Caco-2 (cell line): ENCODE measurements at regions of chr3 and their contacts with region 1.

Region 1: DNA sequence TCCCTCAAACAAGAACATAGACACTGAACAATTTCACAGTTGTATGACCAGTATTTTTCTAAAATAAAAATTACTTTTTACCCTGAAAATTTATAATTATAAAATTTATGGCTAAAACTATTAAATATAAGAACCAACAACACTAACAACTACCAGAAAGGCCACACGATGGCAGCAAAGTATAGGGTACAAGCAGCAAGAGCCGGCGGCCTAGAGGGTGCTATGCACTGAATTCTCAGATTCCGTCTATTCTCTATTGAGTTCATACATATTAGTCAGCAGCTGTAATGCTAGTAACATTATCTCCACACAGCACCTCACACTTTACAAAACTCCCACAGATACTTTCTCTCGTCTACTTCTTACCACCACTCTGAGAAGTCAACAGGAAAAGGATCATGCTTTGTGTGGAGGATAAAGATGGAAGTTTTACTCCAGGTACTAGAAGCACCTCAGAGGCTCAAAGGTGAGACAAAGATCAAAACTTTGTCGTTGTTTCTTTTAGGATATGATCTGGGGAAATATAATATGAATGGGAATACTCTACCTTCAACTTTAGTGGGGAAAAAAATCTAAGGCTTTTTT is 160.5 kb downstream of the FGF12 start:
- DNase-seq: peak; percentile 57 to 73
- H3K4me3 ChIP-seq: no peak overlapping the region
- H3K4me3 Mint-ChIP-seq: no peak overlapping the region
- H3K27ac Mint-ChIP-seq: no peak overlapping the region
- H3K4me1 ChIP-seq: no peaks in the 10 kb centered on the region
- H3K4me1 Mint-ChIP-seq: no peaks in the 10 kb centered on the region
- H3K27me3 ChIP-seq: no peaks in the 10 kb centered on the region
- H3K27me3 Mint-ChIP-seq: peaks cover 7% of the 10 kb centered on the region
- CTCF ChIP-seq: peak; percentile 70 to 72

Region 2: GRCh38 chr3:191985691-191986090 is 581.1 kb before region 1 on chr3:
- CTCF ChIA-PET with region 1: no interaction called
- POLR2A ChIA-PET with region 1: no interaction called
- intact Hi-C with region 1: no loop called
- DNase-seq: no peak
- H3K4me3 ChIP-seq: no peak overlapping the region
- H3K4me3 Mint-ChIP-seq: no peak overlapping the region
- H3K27ac Mint-ChIP-seq: no peak overlapping the region
- H3K4me1 ChIP-seq: no peaks in the 10 kb centered on the region
- H3K4me1 Mint-ChIP-seq: no peaks in the 10 kb centered on the region
- H3K27me3 ChIP-seq: no peaks in the 10 kb centered on the region
- H3K27me3 Mint-ChIP-seq: no peaks in the 10 kb centered on the region
- CTCF ChIP-seq: no peak

Region 3: GRCh38 chr3:192467230-192468140 is 99.3 kb before region 1 on chr3:
- CTCF ChIA-PET with region 1: no interaction called
- POLR2A ChIA-PET with region 1: no interaction called
- intact Hi-C with region 1: loop called (anchors 1 kb)
- DNase-seq: peak; percentile 51 to 68
- H3K4me3 ChIP-seq: no peak overlapping the region
- H3K4me3 Mint-ChIP-seq: no peak overlapping the region
- H3K27ac Mint-ChIP-seq: no peak overlapping the region
- H3K4me1 ChIP-seq: peaks cover 4% of the 10 kb centered on the region; the same call in 1 of the 2 replicates
- H3K4me1 Mint-ChIP-seq: peaks cover 5% of the 10 kb centered on the region
- H3K27me3 ChIP-seq: no peaks in the 10 kb centered on the region
- H3K27me3 Mint-ChIP-seq: peaks cover 18% of the 10 kb centered on the region
- CTCF ChIP-seq: peak; percentile 86 to 90

Region 4: GRCh38 chr3:192597533-192598302 is 30.9 kb after region 1 on chr3:
- CTCF ChIA-PET with region 1: no interaction called
- POLR2A ChIA-PET with region 1: no interaction called
- intact Hi-C with region 1: loop called (anchors 1 kb)
- DNase-seq: peak; percentile 45 to 65
- H3K4me3 ChIP-seq: no peak overlapping the region
- H3K4me3 Mint-ChIP-seq: peak overlapping the region; percentile 39
- H3K27ac Mint-ChIP-seq: peak overlapping the region; percentile 79
- H3K4me1 ChIP-seq: peaks cover 13% of the 10 kb centered on the region
- H3K4me1 Mint-ChIP-seq: peaks cover 14% of the 10 kb centered on the region
- H3K27me3 ChIP-seq: no peaks in the 10 kb centered on the region
- H3K27me3 Mint-ChIP-seq: no peaks in the 10 kb centered on the region
- CTCF ChIP-seq: no peak

Region 5: DNA sequence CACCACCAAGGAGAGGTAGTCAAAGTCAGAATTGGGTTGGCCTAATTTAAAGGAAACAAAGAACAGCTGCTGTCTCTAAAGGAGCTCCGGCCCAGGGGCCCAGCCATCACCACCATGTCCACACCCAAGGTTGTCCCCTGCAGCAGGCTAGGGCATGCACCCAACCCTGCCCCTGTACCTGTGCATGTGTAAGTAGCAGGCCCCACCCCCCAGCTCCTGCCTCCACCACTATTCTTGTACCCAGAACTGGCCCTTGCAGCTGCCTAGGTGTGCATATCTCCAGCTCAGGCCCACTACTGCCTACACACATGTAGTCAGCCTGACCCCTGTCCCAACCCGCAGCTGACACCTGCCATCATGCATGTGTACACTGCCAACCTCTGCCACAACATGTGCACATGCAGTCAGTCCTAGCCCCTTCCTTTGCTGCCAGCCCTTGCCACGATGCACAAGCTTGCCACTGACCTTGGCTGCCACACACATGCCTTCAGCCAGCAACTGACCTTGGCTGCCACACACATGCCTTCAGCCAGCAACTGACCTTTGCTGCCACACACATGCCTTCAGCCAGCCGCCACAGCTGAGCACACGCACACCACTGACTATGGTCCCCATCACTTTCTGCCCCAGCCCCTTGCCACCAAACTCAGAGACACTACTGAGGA is 120.8 kb after region 1 on chr3:
- CTCF ChIA-PET with region 1: no interaction called
- POLR2A ChIA-PET with region 1: no interaction called
- intact Hi-C with region 1: no loop called
- DNase-seq: no peak
- H3K4me3 ChIP-seq: no peak overlapping the region
- H3K4me3 Mint-ChIP-seq: no peak overlapping the region
- H3K27ac Mint-ChIP-seq: no peak overlapping the region
- H3K4me1 ChIP-seq: no peaks in the 10 kb centered on the region
- H3K4me1 Mint-ChIP-seq: no peaks in the 10 kb centered on the region
- H3K27me3 ChIP-seq: no peaks in the 10 kb centered on the region
- H3K27me3 Mint-ChIP-seq: peaks cover 9% of the 10 kb centered on the region
- CTCF ChIP-seq: no peak

Region 6: GRCh38 chr3:192772240-192772894 is 205.6 kb after region 1 on chr3:
- CTCF ChIA-PET with region 1: no interaction called
- POLR2A ChIA-PET with region 1: no interaction called
- intact Hi-C with region 1: loop called (anchors 1 kb)
- DNase-seq: peak in 1 of 2 experiments; percentile 56
- H3K4me3 ChIP-seq: no peak overlapping the region
- H3K4me3 Mint-ChIP-seq: no peak overlapping the region
- H3K27ac Mint-ChIP-seq: no peak overlapping the region
- H3K4me1 ChIP-seq: no peaks in the 10 kb centered on the region
- H3K4me1 Mint-ChIP-seq: no peaks in the 10 kb centered on the region
- H3K27me3 ChIP-seq: no peaks in the 10 kb centered on the region
- H3K27me3 Mint-ChIP-seq: peaks cover 8% of the 10 kb centered on the region
- CTCF ChIP-seq: peak; percentile 36 to 76

Region 7: GRCh38 chr3:192802957-192803899 is 236.4 kb after region 1 on chr3:
- CTCF ChIA-PET with region 1: no interaction called
- POLR2A ChIA-PET with region 1: no interaction called
- intact Hi-C with region 1: loop called (anchors 1 kb)
- DNase-seq: peak in 1 of 2 experiments; percentile 25
- H3K4me3 ChIP-seq: no peak overlapping the region
- H3K4me3 Mint-ChIP-seq: no peak overlapping the region
- H3K27ac Mint-ChIP-seq: no peak overlapping the region
- H3K4me1 ChIP-seq: no peaks in the 10 kb centered on the region
- H3K4me1 Mint-ChIP-seq: no peaks in the 10 kb centered on the region
- H3K27me3 ChIP-seq: no peaks in the 10 kb centered on the region
- H3K27me3 Mint-ChIP-seq: no peaks in the 10 kb centered on the region
- CTCF ChIP-seq: peak; percentile 45 to 61

Region 8: GRCh38 chr3:193040836-193041672 is 474.3 kb after region 1 on chr3:
- CTCF ChIA-PET with region 1: no interaction called
- POLR2A ChIA-PET with region 1: no interaction called
- intact Hi-C with region 1: loop called (anchors 5 kb)
- DNase-seq: peak in 1 of 2 experiments; percentile 63
- H3K4me3 ChIP-seq: no peak overlapping the region
- H3K4me3 Mint-ChIP-seq: no peak overlapping the region
- H3K27ac Mint-ChIP-seq: no peak overlapping the region
- H3K4me1 ChIP-seq: peaks cover 3% of the 10 kb centered on the region
- H3K4me1 Mint-ChIP-seq: peaks cover under 1% of the 10 kb centered on the region
- H3K27me3 ChIP-seq: no peaks in the 10 kb centered on the region
- H3K27me3 Mint-ChIP-seq: no peaks in the 10 kb centered on the region
- CTCF ChIP-seq: peak; percentile 47 to 49

Region 9: GRCh38 chr3:193572426-193572908 is 1005.7 kb after region 1 on chr3:
- CTCF ChIA-PET with region 1: no interaction called
- POLR2A ChIA-PET with region 1: no interaction called
- intact Hi-C with region 1: loop called (anchors 1 kb)
- DNase-seq: peak; percentile 68 to 78
- H3K4me3 ChIP-seq: no peak overlapping the region
- H3K4me3 Mint-ChIP-seq: no peak overlapping the region
- H3K27ac Mint-ChIP-seq: no peak overlapping the region
- H3K4me1 ChIP-seq: no peaks in the 10 kb centered on the region
- H3K4me1 Mint-ChIP-seq: no peaks in the 10 kb centered on the region
- H3K27me3 ChIP-seq: no peaks in the 10 kb centered on the region
- H3K27me3 Mint-ChIP-seq: peaks cover 5% of the 10 kb centered on the region
- CTCF ChIP-seq: peak; percentile 77 to 82